HEK293 (cell line): ENCODE measurements at regions of chr2 and their contacts with region 1.

Region 1: GRCh38 chr2:27281855-27282559 is at the start of gene TRIM54:
- H3K4me3 ChIP-seq: no peak within 1 kb of the TSS
- H3K27ac ChIP-seq: no peak within 1 kb of the TSS
- H3K4me1 ChIP-seq: no peaks in the 10 kb centered on the region; the same call in 1 of the 2 replicates
- CTCF ChIP-seq: no peak

Region 2: DNA sequence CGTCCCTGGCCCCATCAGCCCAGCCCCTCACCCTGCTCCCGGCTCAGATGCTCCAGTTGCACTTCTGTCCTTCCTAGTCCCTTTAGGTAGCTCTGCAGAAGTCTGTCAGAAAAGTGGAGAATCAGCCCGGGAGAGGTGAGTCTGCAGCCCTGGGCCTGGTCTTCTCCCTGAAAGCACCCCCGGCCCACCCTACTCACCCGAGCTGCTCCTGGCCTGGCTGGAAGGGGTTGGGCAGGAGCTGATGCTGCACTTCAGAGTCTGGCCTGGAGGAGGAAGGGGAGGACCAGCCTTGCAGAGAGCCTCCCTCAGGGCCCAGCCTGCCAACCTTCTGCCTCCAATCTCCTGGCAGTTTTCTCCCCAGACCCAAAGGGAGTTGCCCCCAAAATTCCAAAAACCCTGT is 179.7 kb before region 1 on chr2:
- CTCF ChIA-PET with region 1: interaction called, 22 read pairs
- POLR2A ChIA-PET with region 1: no interaction called
- H3K4me3 ChIP-seq: no peak overlapping the region
- H3K27ac ChIP-seq: no peak overlapping the region
- H3K4me1 ChIP-seq: no peaks in the 10 kb centered on the region
- CTCF ChIP-seq: no peak

Region 3: GRCh38 chr2:27249891-27250651 is 31.9 kb before region 1 on chr2:
- CTCF ChIA-PET with region 1: interaction called, 87 read pairs
- POLR2A ChIA-PET with region 1: interaction called, 4 read pairs
- H3K4me3 ChIP-seq: no peak overlapping the region
- H3K27ac ChIP-seq: no peak overlapping the region
- H3K4me1 ChIP-seq: 0 out of 2 replicates have a peak, but pooled peaks cover 4% of the 10 kb centered on the region
- CTCF ChIP-seq: peak; percentile 79

Region 4: DNA sequence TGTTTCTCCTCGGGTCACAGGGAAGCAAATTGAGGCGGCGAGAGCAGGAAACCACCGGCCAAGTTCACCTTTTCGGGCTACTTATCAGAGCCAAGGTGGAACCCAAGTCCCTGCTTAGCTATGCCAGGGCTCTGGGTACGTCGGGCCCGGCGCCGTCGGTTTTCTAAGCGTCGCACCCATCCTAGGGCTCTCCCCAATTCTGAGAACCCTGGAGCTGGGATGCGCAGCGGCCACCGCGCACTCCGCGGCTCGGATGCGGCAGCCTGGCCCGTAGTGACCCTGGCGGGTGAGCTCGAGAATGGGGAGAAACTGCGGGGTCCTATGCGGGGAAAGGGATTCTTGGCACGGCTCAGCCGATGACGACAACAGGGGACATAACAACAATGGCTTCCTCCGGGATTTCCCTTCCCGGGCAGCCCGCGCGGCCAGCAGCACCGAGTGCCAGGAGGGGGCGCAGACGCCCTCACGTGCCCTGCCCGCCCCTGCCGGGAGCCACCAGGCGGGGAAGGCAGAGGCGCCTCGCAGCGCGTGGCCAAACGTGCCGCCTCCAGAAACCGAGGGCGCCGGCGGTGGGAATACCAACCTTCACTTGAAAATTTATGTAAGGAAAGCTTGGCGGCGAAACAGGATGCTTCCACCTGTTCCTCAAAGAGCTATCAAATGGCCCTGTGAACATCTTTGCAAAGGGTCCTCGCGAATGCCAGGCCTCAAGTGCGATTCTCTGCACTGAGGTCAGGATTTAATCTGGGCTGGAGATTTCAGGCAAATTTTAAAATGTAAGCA is 17.1 kb before region 1 on chr2:
- CTCF ChIA-PET with region 1: interaction called, 96 read pairs
- POLR2A ChIA-PET with region 1: interaction called, 3 read pairs
- H3K4me3 ChIP-seq: peak overlapping the region; percentile 25
- H3K27ac ChIP-seq: no peak overlapping the region; the same call in 1 of the 2 replicates
- H3K4me1 ChIP-seq: peaks cover 9% of the 10 kb centered on the region
- CTCF ChIP-seq: peak; percentile 98

Region 5: GRCh38 chr2:27271631-27272340 is 10.2 kb before region 1 on chr2:
- CTCF ChIA-PET with region 1: interaction called, 96 read pairs
- POLR2A ChIA-PET with region 1: no interaction called
- H3K4me3 ChIP-seq: no peak overlapping the region
- H3K27ac ChIP-seq: no peak overlapping the region
- H3K4me1 ChIP-seq: no peaks in the 10 kb centered on the region
- CTCF ChIP-seq: no peak